ENCODE measurements at regions of chrX and their contacts with region 1.

Region 1: DNA sequence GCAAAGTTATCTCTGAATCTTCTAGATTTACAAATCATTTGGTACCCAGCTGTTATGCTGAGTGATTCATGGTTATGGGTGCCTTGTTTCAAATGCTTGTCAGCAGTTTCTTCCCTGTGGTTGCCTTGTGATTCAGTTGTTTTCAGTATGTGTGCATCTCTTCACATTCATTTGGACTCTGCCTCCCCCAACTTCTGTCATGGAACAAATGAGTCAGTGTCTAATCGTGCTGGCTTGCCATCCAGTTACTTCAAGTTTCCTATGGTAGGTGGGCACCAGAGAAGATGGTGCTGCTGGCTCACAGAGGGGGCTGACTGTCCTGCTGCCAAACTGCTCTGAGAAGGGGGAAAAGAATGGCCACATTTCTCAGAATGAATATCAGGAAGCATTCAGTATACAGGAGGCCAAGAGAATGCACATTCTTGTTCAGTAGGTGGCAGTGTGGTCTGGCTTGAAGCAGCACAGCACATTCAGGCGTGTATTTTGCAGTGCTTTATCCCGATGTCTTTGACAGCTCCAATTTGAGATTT is 260.9 kb downstream of the GLUD2 start:
- DNase-seq: peak; percentile 54
- H3K4me3 Mint-ChIP-seq: peak overlapping the region; percentile 49
- H3K27ac Mint-ChIP-seq: peak overlapping the region; percentile 96
- H3K4me1 Mint-ChIP-seq: peaks cover 29% of the 10 kb centered on the region
- H3K27me3 Mint-ChIP-seq: no peaks in the 10 kb centered on the region

Region 2: DNA sequence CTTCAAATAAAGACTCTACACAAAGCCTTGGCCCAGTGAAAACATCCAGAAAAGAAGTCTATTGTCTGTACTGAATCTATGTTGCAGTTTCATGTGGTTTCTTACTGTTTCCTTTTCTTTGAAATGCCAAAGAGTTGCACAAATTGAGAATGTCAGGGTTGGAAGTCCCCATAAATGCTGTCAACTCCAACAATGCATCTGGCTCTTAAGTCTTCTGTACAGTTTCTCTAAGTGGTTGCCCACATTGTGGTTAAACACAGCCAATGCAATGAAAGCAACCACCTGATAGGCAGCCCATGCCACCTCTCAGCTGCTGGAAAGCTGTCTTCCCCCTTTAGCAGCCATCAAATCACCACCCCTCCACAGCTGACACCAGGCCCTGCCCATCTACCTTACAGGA is 611.3 kb before region 1 on chrX:
- intact Hi-C with region 1: loop called (anchors 2 kb)
- DNase-seq: peak; percentile 46
- H3K4me3 Mint-ChIP-seq: peak overlapping the region; percentile 24
- H3K27ac Mint-ChIP-seq: peak overlapping the region; percentile 89
- H3K4me1 Mint-ChIP-seq: peaks cover 15% of the 10 kb centered on the region
- H3K27me3 Mint-ChIP-seq: no peaks in the 10 kb centered on the region

Region 3: DNA sequence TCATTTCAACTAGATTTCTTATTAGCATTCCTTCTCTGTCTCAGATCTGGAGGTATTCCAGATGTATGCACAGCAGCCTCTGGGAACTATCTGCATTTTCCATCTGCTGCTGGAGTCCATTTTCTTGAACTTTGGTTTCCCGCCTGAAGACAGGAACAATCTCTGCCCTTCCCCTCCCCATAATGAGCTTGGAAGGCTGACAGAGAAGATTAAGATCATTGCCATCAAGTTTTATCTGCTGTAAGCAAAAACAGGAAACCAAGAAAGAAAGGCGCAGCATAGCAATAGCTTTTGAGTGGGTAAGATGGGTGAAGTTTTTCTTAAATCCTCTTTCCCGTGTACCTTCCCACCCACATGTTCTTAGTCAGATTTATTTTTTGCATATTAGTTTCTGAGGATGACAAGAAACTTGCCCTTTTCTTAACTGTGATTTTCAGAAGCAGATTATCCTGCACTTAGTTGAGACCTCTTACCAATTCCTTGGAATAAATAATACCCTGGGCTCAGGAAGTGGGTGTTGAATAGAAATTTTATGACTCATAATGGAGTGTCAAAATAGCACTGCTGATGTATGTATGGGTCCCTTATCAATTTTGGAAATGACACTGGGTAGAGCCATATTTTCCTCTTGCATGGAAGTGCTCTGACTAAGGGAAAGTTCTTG is 511.0 kb before region 1 on chrX:
- intact Hi-C with region 1: loop called (anchors 1 kb)
- DNase-seq: no peak
- H3K4me3 Mint-ChIP-seq: peak overlapping the region; percentile 30
- H3K27ac Mint-ChIP-seq: peak overlapping the region; percentile 90
- H3K4me1 Mint-ChIP-seq: peaks cover 79% of the 10 kb centered on the region
- H3K27me3 Mint-ChIP-seq: no peaks in the 10 kb centered on the region

Region 4: GRCh38 chrX:121160987-121161386 is 147.4 kb before region 1 on chrX:
- intact Hi-C with region 1: loop called (anchors 1 kb)
- DNase-seq: no peak
- H3K4me3 Mint-ChIP-seq: peak overlapping the region; percentile 17
- H3K27ac Mint-ChIP-seq: peak overlapping the region; percentile 88
- H3K4me1 Mint-ChIP-seq: peaks cover 37% of the 10 kb centered on the region
- H3K27me3 Mint-ChIP-seq: no peaks in the 10 kb centered on the region

Region 5: GRCh38 chrX:121504148-121504547 is 195.8 kb after region 1 on chrX:
- intact Hi-C with region 1: loop called (anchors 10 kb)
- DNase-seq: no peak
- H3K4me3 Mint-ChIP-seq: no peak overlapping the region
- H3K27ac Mint-ChIP-seq: no peak overlapping the region
- H3K4me1 Mint-ChIP-seq: no peaks in the 10 kb centered on the region
- H3K27me3 Mint-ChIP-seq: no peaks in the 10 kb centered on the region

Region 6: GRCh38 chrX:121598356-121598755 is 290.0 kb after region 1 on chrX:
- intact Hi-C with region 1: no loop called
- DNase-seq: no peak
- H3K4me3 Mint-ChIP-seq: no peak overlapping the region
- H3K27ac Mint-ChIP-seq: no peak overlapping the region
- H3K4me1 Mint-ChIP-seq: no peaks in the 10 kb centered on the region
- H3K27me3 Mint-ChIP-seq: no peaks in the 10 kb centered on the region